ENCODE measurements at regions of chr5 and their contacts with region 1.

Region 1: GRCh38 chr5:59126708-59127573 is 544.1 kb downstream of the RAB3C start:
- DNase-seq: peak in 11 of 35 experiments; percentile 2 to 71 (median 13)
- ATAC-seq: peak; percentile 7 to 23 (median 16)
- H3K4me3 ChIP-seq: peak overlapping the region; percentile 31 to 59
- H3K4me3 Mint-ChIP-seq: no peak overlapping the region
- H3K27ac ChIP-seq: peak overlapping the region; percentile 82
- H3K27ac Mint-ChIP-seq: no peak overlapping the region
- H3K4me1 ChIP-seq: peaks cover 36 to 59% of the 10 kb centered on the region in 2 experiments
- H3K4me1 Mint-ChIP-seq: peaks cover 7 to 17% (median 15%) of the 10 kb centered on the region in 3 donors
- H3K27me3 ChIP-seq: no peaks in the 10 kb centered on the region
- H3K27me3 Mint-ChIP-seq: no peaks in the 10 kb centered on the region

Region 2: GRCh38 chr5:58505971-58506640 is 620.8 kb before region 1 on chr5:
- CTCF ChIA-PET with region 1: no interaction called
- POLR2A ChIA-PET with region 1: no interaction called
- DNase-seq: no peak
- ATAC-seq: no peak
- H3K4me3 ChIP-seq: no peak overlapping the region
- H3K4me3 Mint-ChIP-seq: no peak overlapping the region
- H3K27ac ChIP-seq: no peak overlapping the region
- H3K27ac Mint-ChIP-seq: no peak overlapping the region
- H3K4me1 ChIP-seq: no peaks in the 10 kb centered on the region
- H3K4me1 Mint-ChIP-seq: peaks cover 0 to 6% (median 0%) of the 10 kb centered on the region in 3 donors
- H3K27me3 ChIP-seq: no peaks in the 10 kb centered on the region
- H3K27me3 Mint-ChIP-seq: peaks cover 13 to 21% of the 10 kb centered on the region in 2 donors

Region 3: GRCh38 chr5:58759745-58760144 is 367.2 kb before region 1 on chr5:
- CTCF ChIA-PET with region 1: no interaction called
- POLR2A ChIA-PET with region 1: no interaction called
- DNase-seq: peak in 1 of 35 experiments; percentile 30
- ATAC-seq: peak in 3 of 4 experiments; percentile 15 to 46 (median 23)
- H3K4me3 ChIP-seq: peak overlapping the region; percentile 2 to 37
- H3K4me3 Mint-ChIP-seq: peak overlapping the region; percentile 70 to 76 (median 71)
- H3K27ac ChIP-seq: peak overlapping the region; percentile 51
- H3K27ac Mint-ChIP-seq: peak overlapping the region; percentile 24 to 53
- H3K4me1 ChIP-seq: peaks cover 2 to 4% of the 10 kb centered on the region in 2 experiments
- H3K4me1 Mint-ChIP-seq: peaks cover 27 to 34% (median 32%) of the 10 kb centered on the region in 3 donors
- H3K27me3 ChIP-seq: no peaks in the 10 kb centered on the region
- H3K27me3 Mint-ChIP-seq: peaks cover 0 to 2% of the 10 kb centered on the region in 2 donors

Region 4: GRCh38 chr5:59079622-59080620 is 47.0 kb before region 1 on chr5:
- CTCF ChIA-PET with region 1: no interaction called
- POLR2A ChIA-PET with region 1: interaction called in 1 of 2 experiments, 10 read pairs
- DNase-seq: no peak
- ATAC-seq: no peak
- H3K4me3 ChIP-seq: no peak overlapping the region
- H3K4me3 Mint-ChIP-seq: no peak overlapping the region
- H3K27ac ChIP-seq: no peak overlapping the region
- H3K27ac Mint-ChIP-seq: no peak overlapping the region
- H3K4me1 ChIP-seq: no peaks in the 10 kb centered on the region
- H3K4me1 Mint-ChIP-seq: no peaks in the 10 kb centered on the region
- H3K27me3 ChIP-seq: no peaks in the 10 kb centered on the region
- H3K27me3 Mint-ChIP-seq: peaks cover 0 to 3% of the 10 kb centered on the region in 2 donors

Region 5: DNA sequence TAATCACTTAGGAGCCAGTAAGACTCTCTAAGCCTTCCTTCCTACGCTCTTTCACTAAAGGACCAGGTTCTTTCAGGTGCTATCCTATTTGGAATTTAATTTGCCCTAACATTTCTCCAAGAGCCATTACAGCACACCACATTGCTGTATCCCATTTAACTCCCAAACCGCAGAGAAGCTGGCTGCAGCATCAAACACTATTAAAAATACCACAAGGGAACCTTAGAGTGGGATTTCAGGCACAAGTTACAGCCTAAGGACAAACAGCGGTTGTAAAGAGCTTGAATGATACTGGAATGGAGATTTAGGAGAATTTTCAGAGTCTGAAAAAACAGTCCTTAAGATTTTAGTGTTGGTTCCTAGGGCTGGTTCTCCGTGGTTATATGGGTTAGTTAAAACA is 22.3 kb after region 1 on chr5:
- CTCF ChIA-PET with region 1: interaction called in 1 of 2 experiments, 4 read pairs
- POLR2A ChIA-PET with region 1: interaction called in 1 of 2 experiments, 12 read pairs
- DNase-seq: no peak
- ATAC-seq: no peak
- H3K4me3 ChIP-seq: no peak overlapping the region
- H3K4me3 Mint-ChIP-seq: no peak overlapping the region
- H3K27ac ChIP-seq: no peak overlapping the region
- H3K27ac Mint-ChIP-seq: no peak overlapping the region
- H3K4me1 ChIP-seq: peaks cover 7 to 26% of the 10 kb centered on the region in 2 experiments
- H3K4me1 Mint-ChIP-seq: peaks cover 9 to 23% (median 14%) of the 10 kb centered on the region in 3 donors
- H3K27me3 ChIP-seq: no peaks in the 10 kb centered on the region
- H3K27me3 Mint-ChIP-seq: no peaks in the 10 kb centered on the region

Measured in T-cell (primary cell).